Naive thymus-derived CD4-positive, alpha-beta T cell (primary cell): ENCODE measurements at regions of chr1 and their contacts with region 1.

Region 1: GRCh38 chr1:238281418-238281817 is 390.7 kb upstream of the ZP4 start:
- DNase-seq: no peak
- ATAC-seq: no peak
- H3K4me3 ChIP-seq: no peak overlapping the region
- H3K4me3 Mint-ChIP-seq: no peak overlapping the region
- H3K27ac ChIP-seq: no peak overlapping the region
- H3K27ac Mint-ChIP-seq: no peak overlapping the region
- H3K4me1 ChIP-seq: no peaks in the 10 kb centered on the region
- H3K4me1 Mint-ChIP-seq: no peaks in the 10 kb centered on the region
- H3K27me3 ChIP-seq: no peaks in the 10 kb centered on the region
- H3K27me3 Mint-ChIP-seq: no peaks in the 10 kb centered on the region

Region 2: DNA sequence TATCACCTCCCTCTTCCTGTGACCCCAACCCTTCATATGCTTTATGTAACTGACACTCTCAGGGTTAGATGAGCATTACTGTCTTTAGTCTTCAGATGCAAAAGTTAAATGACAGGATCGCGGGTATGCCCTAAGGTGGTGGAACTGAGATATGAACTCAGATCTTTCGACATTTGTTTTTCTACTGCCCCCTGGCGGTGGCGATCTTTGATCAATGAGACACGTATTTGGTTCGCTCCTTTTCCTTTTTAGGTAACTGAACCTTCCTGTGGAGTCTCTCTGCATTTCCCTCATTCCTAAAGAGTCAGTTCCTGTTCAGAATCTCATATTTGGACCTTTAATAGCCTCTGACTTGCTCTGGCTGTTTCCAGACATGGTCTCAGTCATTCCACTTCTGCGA is 342.9 kb before region 1 on chr1:
- CTCF ChIA-PET with region 1: no interaction called
- POLR2A ChIA-PET with region 1: no interaction called
- intact Hi-C with region 1: no loop called
- DNase-seq: no peak
- ATAC-seq: no peak
- H3K4me3 ChIP-seq: no peak overlapping the region
- H3K4me3 Mint-ChIP-seq: no peak overlapping the region
- H3K27ac ChIP-seq: no peak overlapping the region
- H3K27ac Mint-ChIP-seq: no peak overlapping the region
- H3K4me1 ChIP-seq: no peaks in the 10 kb centered on the region
- H3K4me1 Mint-ChIP-seq: no peaks in the 10 kb centered on the region
- H3K27me3 ChIP-seq: no peaks in the 10 kb centered on the region
- H3K27me3 Mint-ChIP-seq: no peaks in the 10 kb centered on the region

Region 3: GRCh38 chr1:238135708-238136664 is 145.4 kb before region 1 on chr1:
- CTCF ChIA-PET with region 1: no interaction called
- POLR2A ChIA-PET with region 1: no interaction called
- intact Hi-C with region 1: no loop called
- DNase-seq: no peak
- ATAC-seq: no peak
- H3K4me3 ChIP-seq: no peak overlapping the region
- H3K4me3 Mint-ChIP-seq: no peak overlapping the region
- H3K27ac ChIP-seq: no peak overlapping the region
- H3K27ac Mint-ChIP-seq: no peak overlapping the region
- H3K4me1 ChIP-seq: no peaks in the 10 kb centered on the region
- H3K4me1 Mint-ChIP-seq: no peaks in the 10 kb centered on the region
- H3K27me3 ChIP-seq: no peaks in the 10 kb centered on the region
- H3K27me3 Mint-ChIP-seq: no peaks in the 10 kb centered on the region

Region 4: GRCh38 chr1:238223076-238223640 is 58.3 kb before region 1 on chr1:
- CTCF ChIA-PET with region 1: no interaction called
- POLR2A ChIA-PET with region 1: no interaction called
- intact Hi-C with region 1: loop called in 1 of 2 experiments (anchors 10 kb)
- DNase-seq: no peak
- ATAC-seq: no peak
- H3K4me3 ChIP-seq: no peak overlapping the region
- H3K4me3 Mint-ChIP-seq: no peak overlapping the region
- H3K27ac ChIP-seq: no peak overlapping the region
- H3K27ac Mint-ChIP-seq: no peak overlapping the region
- H3K4me1 ChIP-seq: no peaks in the 10 kb centered on the region
- H3K4me1 Mint-ChIP-seq: no peaks in the 10 kb centered on the region
- H3K27me3 ChIP-seq: no peaks in the 10 kb centered on the region
- H3K27me3 Mint-ChIP-seq: no peaks in the 10 kb centered on the region

Region 5: GRCh38 chr1:238606896-238607295 is 325.5 kb after region 1 on chr1:
- CTCF ChIA-PET with region 1: no interaction called
- POLR2A ChIA-PET with region 1: no interaction called
- intact Hi-C with region 1: no loop called
- DNase-seq: no peak
- ATAC-seq: peak; percentile 67
- H3K4me3 ChIP-seq: no peak overlapping the region
- H3K4me3 Mint-ChIP-seq: no peak overlapping the region
- H3K27ac ChIP-seq: no peak overlapping the region
- H3K27ac Mint-ChIP-seq: no peak overlapping the region
- H3K4me1 ChIP-seq: no peaks in the 10 kb centered on the region
- H3K4me1 Mint-ChIP-seq: no peaks in the 10 kb centered on the region
- H3K27me3 ChIP-seq: no peaks in the 10 kb centered on the region
- H3K27me3 Mint-ChIP-seq: no peaks in the 10 kb centered on the region